ENCODE measurements at regions of chr22 and their contacts with region 1.

Region 1: DNA sequence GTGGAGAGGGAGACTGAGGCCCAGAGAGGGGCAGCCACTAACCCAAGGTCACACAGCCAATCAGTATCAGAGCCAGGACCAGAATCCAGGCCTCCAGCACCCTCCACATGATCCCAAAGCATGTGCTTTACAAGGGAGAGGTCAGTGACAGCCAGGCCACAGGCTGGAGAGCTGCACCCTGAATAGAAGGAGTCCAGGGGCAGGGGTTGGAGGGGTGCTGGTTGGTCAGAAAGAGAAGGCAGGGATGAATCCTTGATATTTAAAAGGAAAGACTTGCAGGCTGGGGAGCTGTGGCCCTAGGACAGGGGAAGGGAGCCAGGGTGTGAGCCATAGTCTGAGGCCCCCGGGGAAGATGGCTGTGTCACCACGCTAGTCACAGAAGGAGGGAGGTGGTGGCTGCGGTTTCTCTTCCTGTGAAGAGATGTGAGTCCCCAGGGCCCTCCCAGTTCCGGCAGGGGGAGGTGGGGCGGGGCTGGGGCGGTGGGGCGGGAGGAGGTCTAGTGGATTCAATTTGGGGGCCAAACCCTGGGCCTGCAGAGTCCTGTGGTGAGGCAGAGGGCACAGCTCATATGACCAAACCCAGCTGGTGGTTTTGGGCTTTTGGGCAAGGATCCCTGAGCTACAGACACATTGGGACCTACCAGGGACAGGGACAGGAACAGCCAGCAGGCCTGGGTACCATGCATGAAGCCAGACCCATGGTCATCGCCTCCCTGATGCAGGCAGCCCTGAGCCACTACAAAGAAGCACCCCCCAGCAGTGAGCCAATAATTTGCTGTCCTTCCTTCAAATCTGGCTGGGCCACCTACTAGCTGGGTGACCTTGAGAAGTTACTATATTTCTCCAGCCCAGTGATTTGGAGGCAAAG is 14.0 kb downstream of the RAC2 start:
- DNase-seq: peak; percentile 85
- H3K4me3 Mint-ChIP-seq: peak overlapping the region; percentile 74
- H3K27ac Mint-ChIP-seq: peak overlapping the region; percentile 95
- H3K4me1 Mint-ChIP-seq: peaks cover 81% of the 10 kb centered on the region
- H3K27me3 Mint-ChIP-seq: no peaks in the 10 kb centered on the region

Region 2: DNA sequence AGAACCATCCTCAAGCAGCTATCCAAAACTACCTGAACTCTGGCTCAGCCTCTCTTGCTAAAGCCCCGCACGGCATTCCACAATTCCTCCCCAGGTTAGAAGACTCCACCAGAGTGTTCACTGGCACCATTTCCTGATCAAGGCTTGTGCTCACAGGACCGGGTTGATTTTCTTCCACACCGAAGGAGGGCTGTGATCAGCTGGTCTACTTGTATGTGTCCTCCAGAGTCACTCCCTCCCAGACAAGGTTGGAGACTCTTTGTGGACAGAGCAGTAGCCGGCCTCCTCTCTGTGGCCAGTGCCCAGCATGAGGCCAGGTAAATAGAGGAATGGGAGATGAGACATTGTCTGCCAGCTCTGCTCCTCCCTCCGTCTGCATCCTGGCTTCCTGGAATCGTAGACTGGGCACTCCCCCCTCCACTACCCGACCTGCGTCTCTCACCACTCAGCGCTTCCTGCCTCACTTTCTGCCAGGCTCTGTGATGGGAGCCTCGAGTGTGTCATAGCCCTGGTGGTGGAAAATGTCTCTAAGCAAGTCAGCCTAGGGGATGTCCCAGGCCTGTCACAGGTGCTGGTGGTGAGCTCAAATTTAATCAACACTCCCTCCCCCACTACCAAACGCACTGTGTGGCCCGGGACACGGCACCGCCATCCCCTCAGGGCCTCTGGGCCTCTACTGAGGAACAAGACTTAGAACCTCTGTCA is 108.0 kb before region 1 on chr22:
- intact Hi-C with region 1: loop called (anchors 5 kb)
- DNase-seq: peak; percentile 92
- H3K4me3 Mint-ChIP-seq: peak overlapping the region; percentile 76
- H3K27ac Mint-ChIP-seq: peak overlapping the region; percentile 100
- H3K4me1 Mint-ChIP-seq: peaks cover 73% of the 10 kb centered on the region
- H3K27me3 Mint-ChIP-seq: no peaks in the 10 kb centered on the region

Region 3: GRCh38 chr22:37166675-37167066 is 63.4 kb before region 1 on chr22:
- intact Hi-C with region 1: loop called (anchors 2 kb)
- DNase-seq: peak; percentile 75
- H3K4me3 Mint-ChIP-seq: peak overlapping the region; percentile 68
- H3K27ac Mint-ChIP-seq: peak overlapping the region; percentile 79
- H3K4me1 Mint-ChIP-seq: peaks cover 64% of the 10 kb centered on the region
- H3K27me3 Mint-ChIP-seq: no peaks in the 10 kb centered on the region

Region 4: GRCh38 chr22:37242395-37242918 is 12.4 kb after region 1 on chr22:
- intact Hi-C with region 1: loop called (anchors 1 kb)
- DNase-seq: peak; percentile 92
- H3K4me3 Mint-ChIP-seq: peak overlapping the region; percentile 96
- H3K27ac Mint-ChIP-seq: peak overlapping the region; percentile 94
- H3K4me1 Mint-ChIP-seq: peaks cover 51% of the 10 kb centered on the region
- H3K27me3 Mint-ChIP-seq: no peaks in the 10 kb centered on the region

Region 5: GRCh38 chr22:37608477-37609239 is 378.6 kb after region 1 on chr22 and contains the start of gene GGA1:
- intact Hi-C with region 1: loop called (anchors 10 kb)
- DNase-seq: peak; percentile 98
- H3K4me3 Mint-ChIP-seq: peak within 1 kb of the TSS; percentile 94
- H3K27ac Mint-ChIP-seq: peak within 1 kb of the TSS; percentile 97
- H3K4me1 Mint-ChIP-seq: peaks cover 41% of the 10 kb centered on the region
- H3K27me3 Mint-ChIP-seq: no peaks in the 10 kb centered on the region
- total RNA-seq, gene GGA1: 69.3 and 71.2 TPM in 2 replicates

Measured in activated T-helper 2 cell treated with anti-CD3 and anti-CD28 coated beads, Interferon-gamma antibody, Interleukin-2, Interleukin-4, amounts not matched to agents 10 μg/mL and 5 μg/mL and 100 μg/mL, durations not matched to agents 14 hours and 24 hours and 36 hours (primary cell).